HEK293T (cell line): ENCODE measurements at regions of chr21 and their contacts with region 1.

Region 1: GRCh38 chr21:38352536-38353219 is 95.9 kb downstream of the KCNJ15 start:
- DNase-seq: peak; percentile 54

Region 2: GRCh38 chr21:38219049-38219628 is 133.5 kb before region 1 on chr21:
- CTCF ChIA-PET with region 1: interaction called, 14 read pairs
- POLR2A ChIA-PET with region 1: no interaction called
- DNase-seq: peak; percentile 71

Region 3: GRCh38 chr21:38424305-38425019 is 71.8 kb after region 1 on chr21:
- CTCF ChIA-PET with region 1: no interaction called
- POLR2A ChIA-PET with region 1: no interaction called
- DNase-seq: no peak